Tibial artery (tissue), 4 donors: ENCODE measurements at regions of chr11 and their contacts with region 1.

Region 1: DNA sequence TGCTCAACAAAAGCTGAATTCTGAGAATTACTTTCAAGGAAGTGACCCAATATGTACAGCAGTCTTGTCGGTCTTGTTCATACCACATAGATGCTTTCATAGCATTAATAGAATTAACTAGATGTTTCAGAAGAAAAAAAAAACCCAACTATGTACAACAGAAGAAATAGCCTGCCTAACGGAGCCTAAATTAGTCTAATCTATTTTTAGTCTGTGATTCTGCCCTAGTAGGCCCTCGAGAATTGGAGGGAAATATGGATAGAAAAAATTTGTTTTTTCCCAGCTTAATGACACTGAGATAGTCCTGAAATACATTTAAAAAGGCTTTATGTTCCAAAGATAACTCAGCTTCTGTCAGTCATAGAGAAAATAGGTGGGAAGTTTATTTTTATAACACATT is 17.1 kb upstream of the TRPC6 start:
- DNase-seq: no peak
- H3K4me3 ChIP-seq: no peak overlapping the region
- H3K27ac ChIP-seq: no peak overlapping the region
- H3K4me1 ChIP-seq: peaks cover 0 to 10% (median 0%) of the 10 kb centered on the region in 4 donors
- H3K27me3 ChIP-seq: no peaks in the 10 kb centered on the region
- CTCF ChIP-seq: no peak

Region 2: GRCh38 chr11:101407324-101407723 is 193.6 kb before region 1 on chr11:
- intact Hi-C with region 1: no loop called
- DNase-seq: no peak
- H3K4me3 ChIP-seq: no peak overlapping the region
- H3K27ac ChIP-seq: no peak overlapping the region
- H3K4me1 ChIP-seq: no peaks in the 10 kb centered on the region
- H3K27me3 ChIP-seq: no peaks in the 10 kb centered on the region
- CTCF ChIP-seq: no peak

Region 3: GRCh38 chr11:102036757-102037156 is 435.8 kb after region 1 on chr11:
- intact Hi-C with region 1: loop called (anchors 5 kb)
- DNase-seq: no peak
- H3K4me3 ChIP-seq: no peak overlapping the region
- H3K27ac ChIP-seq: no peak overlapping the region
- H3K4me1 ChIP-seq: no peaks in the 10 kb centered on the region
- H3K27me3 ChIP-seq: no peaks in the 10 kb centered on the region
- CTCF ChIP-seq: no peak